ENCODE measurements at regions of chr2 and their contacts with region 1.

Region 1: GRCh38 chr2:73085691-73086360 is 14.3 kb upstream of the SFXN5 start:
- DNase-seq: peak; percentile 48
- H3K4me3 ChIP-seq: no peak overlapping the region
- H3K27ac ChIP-seq: no peak overlapping the region
- H3K4me1 ChIP-seq: peaks cover 21% of the 10 kb centered on the region
- H3K27me3 ChIP-seq: no peaks in the 10 kb centered on the region
- CTCF ChIP-seq: peak; percentile 86 to 95

Region 2: GRCh38 chr2:72993147-72993932 is 92.5 kb before region 1 on chr2:
- CTCF ChIA-PET with region 1: no interaction called
- dilution Hi-C with region 1: loop called (anchors 5 kb)
- in situ Hi-C with region 1: no loop called
- intact Hi-C with region 1: loop called (anchors 5 kb)
- DNase-seq: no peak
- H3K4me3 ChIP-seq: no peak overlapping the region
- H3K27ac ChIP-seq: no peak overlapping the region
- H3K4me1 ChIP-seq: no peaks in the 10 kb centered on the region
- H3K27me3 ChIP-seq: no peaks in the 10 kb centered on the region
- CTCF ChIP-seq: peak; percentile 70 to 73

Region 3: DNA sequence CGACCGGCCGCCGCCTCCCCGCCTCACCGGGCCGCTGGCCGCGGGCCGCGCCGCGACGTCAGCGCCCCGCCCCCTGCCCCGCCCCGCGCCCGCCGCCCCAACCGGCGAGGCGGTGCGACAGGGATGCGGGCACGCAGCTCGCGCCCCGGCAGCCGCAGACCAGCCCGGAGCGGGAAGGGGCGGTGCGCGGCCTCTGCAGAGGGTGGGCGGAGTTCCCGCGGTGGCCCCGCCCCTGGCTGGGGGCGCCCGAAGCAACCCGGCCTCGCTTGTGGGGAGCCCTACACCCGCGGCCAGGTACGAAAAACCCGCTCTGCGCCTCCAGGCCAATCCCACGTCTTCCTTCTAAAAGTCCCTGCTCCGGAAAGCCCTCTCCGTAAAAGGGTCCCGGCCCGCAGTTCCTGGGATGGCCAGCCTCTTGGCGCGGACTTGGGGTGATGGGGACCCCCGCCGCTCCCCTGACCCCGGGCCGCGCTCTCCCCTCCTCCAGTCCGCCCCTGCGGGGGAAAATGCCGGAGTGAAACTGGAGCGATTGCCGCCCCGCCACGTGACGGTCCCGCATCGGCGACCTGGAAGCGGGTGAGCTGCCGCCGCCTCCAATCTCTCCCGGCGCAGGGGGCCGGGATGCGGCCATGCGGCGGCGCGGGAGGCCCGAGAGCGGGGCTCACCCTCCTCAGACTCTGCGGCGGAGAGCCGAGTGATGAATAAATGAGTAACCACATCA is 27.2 kb after region 1 on chr2 and contains the start of gene RAB11FIP5:
- CTCF ChIA-PET with region 1: no interaction called
- dilution Hi-C with region 1: no loop called
- in situ Hi-C with region 1: no loop called
- intact Hi-C with region 1: loop called (anchors 1 kb)
- DNase-seq: peak; percentile 86
- H3K4me3 ChIP-seq: peak within 1 kb of the TSS; percentile 79 to 89 (median 86)
- H3K27ac ChIP-seq: peak within 1 kb of the TSS; percentile 92
- H3K4me1 ChIP-seq: peaks cover 16% of the 10 kb centered on the region
- H3K27me3 ChIP-seq: no peaks in the 10 kb centered on the region
- CTCF ChIP-seq: no peak
- total RNA-seq, gene RAB11FIP5: 36.0 to 39.7 TPM

Region 4: DNA sequence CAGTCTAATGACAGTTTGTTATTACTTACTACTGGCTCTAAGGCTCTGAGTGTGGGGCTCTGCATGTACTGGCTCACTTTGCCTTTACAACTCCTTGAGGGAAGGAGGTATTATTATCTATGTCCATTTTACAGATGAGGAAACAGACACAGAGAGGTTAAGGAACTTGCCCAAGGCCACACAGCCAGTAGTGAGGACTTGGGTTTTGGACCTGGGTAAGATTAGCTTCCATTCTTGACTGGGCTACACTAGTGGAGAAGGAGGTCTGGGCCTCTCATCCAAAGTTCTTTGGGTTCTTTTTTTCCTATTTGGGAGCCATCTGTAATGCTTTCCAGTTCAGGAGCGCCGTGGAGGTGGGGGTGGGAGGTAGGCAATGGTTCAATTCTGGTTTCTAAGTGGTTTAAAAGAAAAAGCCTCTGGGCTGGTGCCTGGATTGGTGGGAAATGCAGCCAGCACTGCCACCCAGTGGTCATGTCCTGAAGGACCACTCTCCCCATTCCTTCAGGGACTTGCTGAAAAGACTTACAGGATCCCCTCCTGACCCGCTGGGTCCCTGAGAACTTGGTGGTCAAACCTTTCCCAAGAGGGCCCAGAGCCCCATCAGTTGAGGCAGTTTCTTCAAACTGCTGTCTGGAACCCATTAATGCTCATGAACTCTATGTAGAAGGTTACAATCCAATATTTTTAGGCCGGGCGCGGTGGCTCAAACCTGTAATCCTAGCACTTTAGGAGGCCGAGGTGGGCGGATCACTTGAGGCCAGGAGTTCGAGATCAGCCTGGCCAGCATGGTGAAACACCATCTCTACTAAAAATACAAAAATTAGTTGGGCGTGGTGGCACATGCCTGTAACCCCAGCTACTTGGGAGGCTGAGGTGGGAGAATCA is 77.9 kb after region 1 on chr2:
- CTCF ChIA-PET with region 1: no interaction called
- dilution Hi-C with region 1: loop called (anchors 5 kb)
- in situ Hi-C with region 1: loop called (anchors 5 kb)
- intact Hi-C with region 1: loop called (anchors 1 kb)
- DNase-seq: peak; percentile 37
- H3K4me3 ChIP-seq: no peak overlapping the region
- H3K27ac ChIP-seq: no peak overlapping the region
- H3K4me1 ChIP-seq: no peaks in the 10 kb centered on the region
- H3K27me3 ChIP-seq: no peaks in the 10 kb centered on the region
- CTCF ChIP-seq: peak; percentile 89 to 90

Region 5: DNA sequence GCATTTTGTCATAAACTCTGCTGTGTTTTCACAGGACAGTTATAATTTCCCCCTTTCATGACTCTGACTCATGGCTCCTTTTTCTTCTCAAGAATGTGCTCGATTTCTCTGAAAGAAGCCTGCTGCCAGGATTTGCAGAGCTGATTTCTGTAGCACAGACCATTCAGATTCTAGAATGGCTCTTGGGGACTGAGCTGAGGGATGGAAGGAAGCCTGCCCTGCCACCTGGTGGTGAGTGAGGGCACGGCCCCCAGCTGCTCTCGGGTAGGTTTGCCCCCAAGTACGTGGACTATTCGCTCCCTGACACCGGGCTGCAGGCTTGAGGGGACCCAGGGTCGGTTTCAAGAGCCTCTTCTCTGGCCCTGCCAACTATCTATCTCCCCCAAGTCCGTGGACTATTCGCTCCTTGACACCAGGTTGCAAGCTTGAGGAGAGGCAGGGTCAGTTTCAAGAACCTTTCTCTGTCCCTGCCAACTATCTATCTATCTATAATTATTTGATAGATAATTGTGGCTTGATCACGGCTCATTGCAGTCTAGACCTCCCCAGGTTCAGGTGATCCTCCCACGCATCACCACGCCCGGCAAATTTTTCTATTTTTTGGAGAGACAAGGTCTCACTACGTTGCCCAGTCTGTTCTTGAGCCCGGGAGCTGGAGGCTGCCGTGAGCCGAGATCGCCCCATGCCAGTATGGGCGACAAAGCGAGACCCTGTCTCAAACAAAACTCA is 126.8 kb after region 1 on chr2:
- CTCF ChIA-PET with region 1: no interaction called
- dilution Hi-C with region 1: no loop called
- in situ Hi-C with region 1: no loop called
- intact Hi-C with region 1: loop called (anchors 1 kb)
- DNase-seq: peak; percentile 44
- H3K4me3 ChIP-seq: no peak overlapping the region
- H3K27ac ChIP-seq: no peak overlapping the region
- H3K4me1 ChIP-seq: peaks cover 13% of the 10 kb centered on the region
- H3K27me3 ChIP-seq: no peaks in the 10 kb centered on the region
- CTCF ChIP-seq: peak; percentile 93 to 94